ENCODE measurements at regions of chr19 and their contacts with region 1.

Region 1: GRCh38 chr19:50777754-50778303 is 7.6 kb downstream of the GPR32 start:
- DNase-seq: no peak
- H3K4me3 ChIP-seq: no peak overlapping the region
- H3K27ac ChIP-seq: no peak overlapping the region
- H3K4me1 ChIP-seq: no peaks in the 10 kb centered on the region
- H3K27me3 ChIP-seq: peaks cover 7% of the 10 kb centered on the region
- CTCF ChIP-seq: no peak

Region 2: DNA sequence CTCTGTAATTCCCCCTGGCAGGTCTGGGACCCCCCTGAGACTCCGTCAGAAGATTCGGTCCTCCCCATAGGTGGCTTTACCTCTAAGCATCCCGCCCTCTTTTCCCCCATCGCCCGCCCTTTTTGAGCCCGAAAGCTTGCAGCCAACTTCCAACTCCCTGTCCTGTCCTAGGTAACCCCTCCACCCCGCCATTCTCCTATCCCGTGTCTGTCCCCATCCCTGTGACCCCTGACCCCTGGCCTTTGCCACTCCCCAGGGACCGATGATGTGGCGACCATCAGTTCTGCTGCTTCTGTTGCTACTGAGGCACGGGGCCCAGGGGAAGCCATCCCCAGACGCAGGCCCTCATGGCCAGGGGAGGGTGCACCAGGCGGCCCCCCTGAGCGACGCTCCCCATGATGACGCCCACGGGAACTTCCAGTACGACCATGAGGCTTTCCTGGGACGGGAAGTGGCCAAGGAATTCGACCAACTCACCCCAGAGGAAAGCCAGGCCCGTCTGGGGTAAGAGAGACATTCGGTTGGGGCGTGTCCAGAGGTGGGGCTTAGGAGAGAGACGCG is 1249.5 kb before region 1 on chr19:
- intact Hi-C with region 1: no loop called
- DNase-seq: peak in 1 of 2 donors; percentile 75
- H3K4me3 ChIP-seq: peak overlapping the region; percentile 44 to 74
- H3K27ac ChIP-seq: peak overlapping the region; percentile 71 to 81
- H3K4me1 ChIP-seq: peaks cover 3 to 7% of the 10 kb centered on the region in 2 donors
- H3K27me3 ChIP-seq: no peaks in the 10 kb centered on the region
- CTCF ChIP-seq: no peak

Region 3: DNA sequence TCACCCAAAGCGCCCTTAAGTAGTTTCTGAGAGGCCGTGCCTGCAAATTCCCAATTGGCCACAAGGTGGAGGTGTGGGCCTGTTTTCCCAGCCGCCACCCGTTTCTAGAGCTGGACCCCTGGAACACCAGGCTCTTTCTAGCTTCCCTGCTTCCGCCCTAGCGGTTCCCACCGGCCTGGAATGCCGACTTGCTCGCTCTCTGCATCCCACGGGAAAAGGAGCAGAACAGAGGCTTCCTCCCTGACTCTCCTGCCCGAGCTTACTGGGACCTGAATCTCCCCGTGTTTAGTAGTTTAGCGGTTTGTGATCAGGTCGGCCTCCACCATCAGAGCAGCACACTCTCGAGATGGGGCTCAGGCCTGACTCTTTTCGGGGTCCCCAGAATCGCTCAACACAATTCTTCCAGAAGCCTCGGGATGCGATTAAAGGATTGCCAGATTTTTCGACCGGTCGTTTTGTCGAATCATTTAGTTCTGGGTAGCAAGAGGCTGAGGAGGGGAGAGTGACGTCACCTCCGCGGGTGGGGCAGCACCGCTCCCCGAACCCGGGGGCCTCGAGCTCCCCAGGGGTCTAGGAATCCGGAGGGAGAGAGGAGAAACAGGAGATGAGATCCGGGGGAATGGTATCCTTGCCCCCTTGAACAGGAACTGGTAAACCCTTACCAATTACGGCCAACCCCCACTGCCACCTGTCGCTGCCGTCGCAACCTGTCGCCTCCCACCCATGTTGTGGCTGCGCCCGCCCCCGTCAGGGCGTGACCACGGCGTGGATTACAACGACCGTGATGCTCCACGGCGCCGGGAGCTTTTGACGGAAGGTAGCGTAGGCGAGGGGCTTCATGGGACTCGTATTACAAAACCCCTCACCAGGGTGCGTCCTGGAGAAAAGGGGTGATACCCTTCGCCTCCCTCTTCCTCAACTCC is 420.4 kb before region 1 on chr19:
- intact Hi-C with region 1: loop called (anchors 2 kb)
- DNase-seq: peak; percentile 41 to 90
- H3K4me3 ChIP-seq: peak overlapping the region; percentile 50 to 59
- H3K27ac ChIP-seq: peak overlapping the region; percentile 81 to 86
- H3K4me1 ChIP-seq: peaks cover 0 to 2% of the 10 kb centered on the region in 2 donors
- H3K27me3 ChIP-seq: no peaks in the 10 kb centered on the region
- CTCF ChIP-seq: peak; percentile 80 to 89 (median 85)

Measured in ascending aorta (tissue), 2 donors.